AG04450 (cell line): ENCODE measurements at regions of chr2 and their contacts with region 1.

Region 1: GRCh38 chr2:145653553-145653952 is 1133.6 kb upstream of the ZEB2 start:
- DNase-seq: no peak
- H3K4me3 ChIP-seq: no peak overlapping the region
- H3K27ac ChIP-seq: no peak overlapping the region
- H3K27me3 ChIP-seq: no peaks in the 10 kb centered on the region
- CTCF ChIP-seq: no peak

Region 2: DNA sequence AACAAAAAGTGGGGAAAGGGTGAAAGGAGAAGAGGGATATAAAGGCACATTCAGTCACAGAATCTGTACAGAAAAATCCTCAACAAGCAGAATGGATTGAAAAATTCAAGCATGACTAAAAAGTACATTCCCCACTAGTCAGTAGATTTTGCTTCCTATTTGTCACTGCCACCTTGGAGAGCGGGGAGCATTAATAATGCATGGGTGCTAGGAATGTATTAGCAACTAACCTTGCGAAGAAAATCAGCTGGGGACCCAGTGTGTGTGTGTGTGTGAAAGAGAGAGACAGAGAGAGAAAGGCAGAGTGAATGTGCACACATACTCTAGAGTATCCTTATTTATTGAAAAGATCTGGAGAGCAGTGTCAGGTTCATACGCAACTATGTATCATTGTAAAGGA is 165.0 kb before region 1 on chr2:
- CTCF ChIA-PET with region 1: no interaction called
- POLR2A ChIA-PET with region 1: no interaction called
- DNase-seq: no peak
- H3K4me3 ChIP-seq: no peak overlapping the region
- H3K27ac ChIP-seq: no peak overlapping the region
- H3K27me3 ChIP-seq: no peaks in the 10 kb centered on the region
- CTCF ChIP-seq: no peak

Region 3: GRCh38 chr2:145584353-145584752 is 69.2 kb before region 1 on chr2:
- CTCF ChIA-PET with region 1: interaction called, 12 read pairs
- POLR2A ChIA-PET with region 1: no interaction called
- DNase-seq: no peak
- H3K4me3 ChIP-seq: no peak overlapping the region
- H3K27ac ChIP-seq: no peak overlapping the region
- H3K27me3 ChIP-seq: no peaks in the 10 kb centered on the region
- CTCF ChIP-seq: no peak